OCI-LY7 (cell line): ENCODE measurements at regions of chr10 and their contacts with region 1.

Region 1: DNA sequence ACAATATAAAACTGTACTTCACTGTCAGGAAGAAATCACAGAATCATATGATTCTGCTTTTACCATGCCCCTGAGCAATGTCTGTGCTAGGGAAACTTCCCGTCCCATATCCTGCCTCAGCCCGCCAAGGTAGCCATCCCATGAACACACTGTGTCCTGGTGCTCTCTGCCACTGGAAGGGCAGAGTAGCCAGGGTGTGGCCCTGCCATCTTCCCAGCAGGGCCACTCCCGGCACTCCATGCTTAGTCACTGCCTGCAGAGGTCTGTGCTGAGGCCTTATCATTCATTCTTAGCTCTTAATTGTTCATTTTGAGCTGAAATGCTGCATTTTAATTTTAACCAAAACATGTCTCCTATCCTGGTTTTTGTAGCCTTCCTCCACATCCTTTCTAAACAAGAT is 31.8 kb downstream of the AP3M1 start:
- DNase-seq: no peak
- H3K4me3 ChIP-seq: no peak overlapping the region
- H3K27ac ChIP-seq: no peak overlapping the region
- H3K4me1 ChIP-seq: no peaks in the 10 kb centered on the region
- CTCF ChIP-seq: no peak

Region 2: GRCh38 chr10:72746426-72747363 is 1372.1 kb before region 1 on chr10:
- CTCF ChIA-PET with region 1: no interaction called
- POLR2A ChIA-PET with region 1: no interaction called
- intact Hi-C with region 1: no loop called
- DNase-seq: no peak
- H3K4me3 ChIP-seq: no peak overlapping the region
- H3K27ac ChIP-seq: no peak overlapping the region
- H3K4me1 ChIP-seq: no peaks in the 10 kb centered on the region
- CTCF ChIP-seq: no peak

Region 3: GRCh38 chr10:73054286-73054685 is 1064.5 kb before region 1 on chr10:
- CTCF ChIA-PET with region 1: no interaction called
- POLR2A ChIA-PET with region 1: no interaction called
- intact Hi-C with region 1: no loop called
- DNase-seq: no peak
- H3K4me3 ChIP-seq: no peak overlapping the region
- H3K27ac ChIP-seq: no peak overlapping the region
- H3K4me1 ChIP-seq: no peaks in the 10 kb centered on the region
- CTCF ChIP-seq: no peak

Region 4: DNA sequence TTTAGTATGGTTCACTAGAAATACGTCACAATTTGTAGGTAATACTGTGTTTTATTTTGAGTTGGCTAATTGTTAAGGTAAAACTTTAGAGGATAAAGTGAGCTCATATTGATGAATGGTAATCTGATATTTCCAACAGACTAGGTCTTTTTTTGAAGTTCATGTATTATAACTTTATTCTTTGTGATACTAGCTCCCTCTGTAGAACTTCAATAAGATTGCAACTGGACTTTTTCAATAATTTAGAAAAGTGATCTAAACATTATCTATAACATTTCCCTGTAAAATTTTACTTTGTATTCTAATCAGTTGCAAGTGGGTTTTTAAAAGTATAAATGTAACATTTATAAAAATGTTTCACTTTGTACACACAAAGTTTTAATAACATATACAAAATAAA is 115.8 kb after region 1 on chr10:
- CTCF ChIA-PET with region 1: no interaction called
- POLR2A ChIA-PET with region 1: interaction called, 3 read pairs
- intact Hi-C with region 1: loop called (anchors 5 kb)
- DNase-seq: peak; percentile 20
- H3K4me3 ChIP-seq: no peak overlapping the region
- H3K27ac ChIP-seq: no peak overlapping the region
- H3K4me1 ChIP-seq: no peaks in the 10 kb centered on the region
- CTCF ChIP-seq: peak; percentile 81